ENCODE measurements at regions of chr4 and their contacts with region 1.

Region 1: GRCh38 chr4:54107951-54108873 is 8.2 kb downstream of the GSX2 start:
- DNase-seq: peak in 1 of 5 donors; percentile 31
- H3K4me3 ChIP-seq: no peak overlapping the region
- H3K4me3 Mint-ChIP-seq: peak overlapping the region; percentile 19 to 88 (median 73)
- H3K27ac ChIP-seq: no peak overlapping the region
- H3K27ac Mint-ChIP-seq: peak overlapping the region in 1 of 8 donors; percentile 44
- H3K4me1 ChIP-seq: peaks cover 7% of the 10 kb centered on the region
- H3K4me1 Mint-ChIP-seq: peaks cover 11 to 41% (median 26%) of the 10 kb centered on the region in 3 donors
- H3K27me3 ChIP-seq: peaks cover 65% of the 10 kb centered on the region
- H3K27me3 Mint-ChIP-seq: peaks cover 67 to 91% of the 10 kb centered on the region in 2 donors

Region 2: DNA sequence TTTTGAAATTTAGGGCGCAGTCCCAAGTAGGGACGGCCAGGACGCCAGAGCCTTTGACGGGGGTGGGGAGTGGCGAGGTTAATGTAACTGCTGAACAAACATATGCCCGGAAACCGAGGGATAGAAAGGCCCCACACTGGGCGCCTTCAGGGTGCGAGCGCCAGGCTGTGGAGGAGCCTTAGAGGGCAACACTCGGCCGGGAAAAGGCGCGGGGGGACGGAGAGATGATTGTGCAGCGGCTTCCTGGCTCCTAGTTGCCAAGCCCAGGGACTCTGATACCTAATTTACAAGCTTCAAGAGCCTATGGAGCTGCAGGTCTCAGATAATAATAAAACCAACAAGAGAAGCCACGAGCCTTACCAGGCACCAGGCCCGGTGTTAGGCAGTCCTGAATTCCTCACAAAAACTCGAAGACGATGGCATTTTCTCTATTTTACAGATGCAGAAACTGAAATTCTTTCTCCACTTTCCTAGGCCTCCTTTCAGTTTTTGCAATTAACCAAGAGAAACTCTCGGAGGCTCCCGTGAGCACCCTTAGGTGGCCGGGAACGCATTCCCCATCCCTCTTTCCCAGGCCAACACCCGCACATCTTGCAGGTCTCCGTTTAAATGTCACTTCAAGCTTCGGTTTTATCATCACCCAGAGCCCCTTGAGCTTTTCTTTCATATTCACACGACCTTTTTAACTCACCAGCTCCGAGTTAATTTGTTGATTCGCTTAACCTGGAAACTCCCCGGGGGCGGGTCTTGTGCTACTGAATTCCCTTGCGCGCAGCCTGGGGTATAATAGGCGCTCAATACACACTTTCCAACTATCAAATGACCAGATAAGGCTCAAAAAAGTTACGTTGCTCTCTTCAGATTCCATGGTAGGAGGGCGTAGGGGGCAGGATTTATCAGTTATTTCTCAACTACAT is 14.6 kb before region 1 on chr4:
- CTCF ChIA-PET with region 1: no interaction called
- POLR2A ChIA-PET with region 1: interaction called, 11 read pairs
- DNase-seq: no peak
- H3K4me3 ChIP-seq: no peak overlapping the region
- H3K4me3 Mint-ChIP-seq: peak overlapping the region in 4 of 7 donors; percentile 8 to 38 (median 26)
- H3K27ac ChIP-seq: no peak overlapping the region
- H3K27ac Mint-ChIP-seq: peak overlapping the region in 1 of 8 donors; percentile 73
- H3K4me1 ChIP-seq: peaks cover 14% of the 10 kb centered on the region
- H3K4me1 Mint-ChIP-seq: peaks cover 26 to 47% (median 35%) of the 10 kb centered on the region in 3 donors
- H3K27me3 ChIP-seq: peaks cover 62% of the 10 kb centered on the region
- H3K27me3 Mint-ChIP-seq: peaks cover 58 to 85% of the 10 kb centered on the region in 2 donors